HepG2 (cell line): ENCODE measurements at regions of chr10 and their contacts with region 1.

Region 1: DNA sequence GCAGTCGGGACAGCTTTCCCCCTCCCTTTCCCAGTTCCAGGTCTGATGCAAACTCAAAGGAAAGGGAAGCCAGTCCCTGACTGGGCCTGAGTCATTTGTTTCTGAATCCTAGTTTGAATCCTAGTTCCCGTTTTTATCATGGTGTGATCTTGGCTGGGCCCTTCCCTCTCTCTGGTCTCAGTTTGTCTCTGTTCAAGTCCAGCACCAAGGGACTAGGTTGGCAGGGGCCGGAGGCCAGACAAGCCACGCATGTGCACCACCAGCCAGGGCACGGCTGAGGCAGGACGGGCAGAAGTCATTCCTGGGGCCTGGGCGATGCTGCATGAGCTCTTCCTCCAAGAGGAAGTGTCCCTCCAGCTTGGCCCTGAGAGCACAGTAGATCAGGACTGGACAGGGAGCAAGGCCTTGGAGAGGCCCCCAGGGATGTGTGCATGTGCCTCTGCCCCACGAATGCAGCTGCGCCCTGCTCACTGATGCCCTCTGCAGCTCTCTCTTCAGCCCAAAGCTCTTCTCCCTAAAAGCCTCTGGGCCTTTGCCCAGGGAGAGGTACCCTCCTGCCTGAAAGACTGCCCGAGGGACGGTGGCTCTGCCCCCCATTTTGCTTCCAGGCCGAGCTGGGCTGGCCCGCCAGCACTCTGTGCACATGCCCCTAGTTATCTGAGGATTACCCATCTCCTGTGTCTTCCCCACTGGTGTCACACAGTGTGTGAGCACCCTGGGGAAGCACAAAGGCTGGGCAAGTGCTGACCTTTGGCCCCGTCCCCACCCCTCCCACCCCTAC is 86.7 kb downstream of the ZMIZ1 start:
- DNase-seq: no peak
- ATAC-seq: no peak
- H3K4me3 ChIP-seq: no peak overlapping the region
- H3K27ac ChIP-seq: peak overlapping the region; percentile 39
- H3K4me1 ChIP-seq: peaks cover 70% of the 10 kb centered on the region
- H3K27me3 ChIP-seq: no peaks in the 10 kb centered on the region
- CTCF ChIP-seq: no peak
- EP300 ChIP-seq: no peak
- POLR2A ChIP-seq: no peak
- RAD21 ChIP-seq: 0 out of 2 replicates have a peak, but pooled peaks have one; percentile 30

Region 2: GRCh38 chr10:79184145-79184625 is 28.7 kb after region 1 on chr10:
- CTCF ChIA-PET with region 1: no interaction called
- POLR2A ChIA-PET with region 1: interaction called, 31 read pairs
- in situ Hi-C with region 1: no loop called
- intact Hi-C with region 1: no loop called
- DNase-seq: peak; percentile 77
- ATAC-seq: peak; percentile 44
- H3K4me3 ChIP-seq: peak overlapping the region in 1 of 3 experiments; percentile 50; a peak in 2 of 6 replicates
- H3K27ac ChIP-seq: peak overlapping the region; percentile 93
- H3K4me1 ChIP-seq: peaks cover 100% of the 10 kb centered on the region
- H3K27me3 ChIP-seq: no peaks in the 10 kb centered on the region
- CTCF ChIP-seq: no peak
- EP300 ChIP-seq: peak; percentile 28 to 78; a peak in 2 of 4 replicates
- POLR2A ChIP-seq: peak; percentile 34 to 52; a peak in 2 of 4 replicates
- RAD21 ChIP-seq: 0 out of 2 replicates have a peak, but pooled peaks have one; percentile 10

Region 3: DNA sequence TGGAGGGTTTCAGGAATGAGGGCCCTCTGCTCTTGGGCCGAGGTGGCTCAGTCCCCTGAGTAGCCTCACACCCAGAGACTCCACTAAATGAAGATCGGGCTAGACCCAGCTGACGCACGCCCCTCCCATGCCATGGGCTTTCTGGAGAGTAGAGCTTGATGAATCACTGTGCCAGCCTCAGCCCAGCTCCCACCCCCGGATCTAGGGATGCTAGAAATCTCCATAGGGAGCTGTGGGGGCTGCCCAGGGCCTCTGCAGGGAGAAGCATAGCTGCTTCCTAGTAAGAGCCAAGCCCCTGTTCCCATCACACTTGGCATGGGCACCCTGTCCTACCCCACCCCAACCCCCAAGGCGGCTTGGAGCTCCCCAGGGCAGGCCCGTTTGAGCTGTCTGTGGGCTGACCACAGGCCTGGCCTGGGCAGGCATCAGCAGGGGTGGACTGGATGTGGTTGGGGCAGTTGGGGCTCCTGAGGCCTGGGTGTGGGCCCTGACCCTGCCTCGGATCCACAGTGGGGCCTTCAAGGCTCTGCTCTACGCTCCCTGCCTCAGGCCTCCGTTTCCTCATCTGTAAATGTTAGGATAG is 34.5 kb after region 1 on chr10:
- CTCF ChIA-PET with region 1: no interaction called
- POLR2A ChIA-PET with region 1: interaction called, 31 read pairs
- in situ Hi-C with region 1: no loop called
- intact Hi-C with region 1: loop called (anchors 2 kb)
- DNase-seq: no peak
- ATAC-seq: no peak
- H3K4me3 ChIP-seq: no peak overlapping the region
- H3K27ac ChIP-seq: no peak overlapping the region
- H3K4me1 ChIP-seq: peaks cover 71% of the 10 kb centered on the region
- H3K27me3 ChIP-seq: no peaks in the 10 kb centered on the region
- CTCF ChIP-seq: no peak
- EP300 ChIP-seq: no peak
- POLR2A ChIP-seq: no peak
- RAD21 ChIP-seq: no peak

Region 4: DNA sequence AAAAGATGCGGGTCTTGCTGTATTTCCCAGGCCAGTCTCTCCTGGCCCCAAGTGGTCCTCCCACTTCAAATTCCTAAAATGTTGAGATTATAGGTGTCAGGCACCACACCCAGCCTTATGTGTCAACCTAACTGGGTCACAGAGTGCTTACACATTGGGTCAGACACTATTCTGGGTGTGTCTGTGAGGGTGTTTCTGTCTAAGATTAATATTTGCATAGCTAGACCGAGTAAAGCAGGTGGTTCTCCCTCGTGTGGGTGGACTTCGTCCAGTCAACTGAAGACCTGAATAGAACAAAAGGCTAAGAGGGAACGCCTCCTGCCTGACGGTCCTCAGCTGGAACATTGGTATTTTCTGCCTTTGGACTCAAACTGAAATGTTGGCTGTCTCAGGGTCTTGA is 203.3 kb after region 1 on chr10:
- CTCF ChIA-PET with region 1: no interaction called
- POLR2A ChIA-PET with region 1: no interaction called
- in situ Hi-C with region 1: no loop called
- intact Hi-C with region 1: no loop called
- DNase-seq: peak; percentile 94
- ATAC-seq: peak; percentile 91
- H3K4me3 ChIP-seq: no peak overlapping the region
- H3K27ac ChIP-seq: peak overlapping the region; percentile 44
- H3K4me1 ChIP-seq: peaks cover 41% of the 10 kb centered on the region
- H3K27me3 ChIP-seq: no peaks in the 10 kb centered on the region
- CTCF ChIP-seq: peak; percentile 38
- EP300 ChIP-seq: peak in 1 of 2 experiments; percentile 40; a peak in 1 of 4 replicates
- POLR2A ChIP-seq: no peak
- RAD21 ChIP-seq: no peak